Aorta (tissue), 5 donors: ENCODE measurements at regions of chr4 and their contacts with region 1.

Region 1: DNA sequence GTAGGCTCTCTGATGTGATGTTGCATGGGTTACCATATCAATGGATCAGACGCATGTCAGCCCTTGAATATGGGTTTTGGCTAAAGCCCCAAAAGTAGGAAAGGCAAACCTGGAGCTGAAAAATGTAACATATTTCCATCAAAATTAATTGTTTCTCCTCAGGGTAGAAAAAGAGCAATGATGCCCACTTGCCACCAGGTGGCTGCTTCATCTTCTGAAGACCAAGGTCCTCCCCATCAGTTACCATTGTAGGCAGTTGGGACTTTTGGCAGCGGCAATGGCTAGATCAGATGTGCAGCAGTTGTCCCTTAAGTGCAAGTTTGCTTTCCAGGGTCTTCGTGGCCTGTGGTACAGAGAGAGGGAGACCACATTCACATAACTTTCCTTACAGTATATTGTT is 118.2 kb downstream of the NAF1 start:
- DNase-seq: no peak
- ATAC-seq: no peak
- H3K4me3 ChIP-seq: no peak overlapping the region
- H3K27ac ChIP-seq: no peak overlapping the region
- H3K4me1 ChIP-seq: no peaks in the 10 kb centered on the region
- H3K27me3 ChIP-seq: no peaks in the 10 kb centered on the region

Region 2: DNA sequence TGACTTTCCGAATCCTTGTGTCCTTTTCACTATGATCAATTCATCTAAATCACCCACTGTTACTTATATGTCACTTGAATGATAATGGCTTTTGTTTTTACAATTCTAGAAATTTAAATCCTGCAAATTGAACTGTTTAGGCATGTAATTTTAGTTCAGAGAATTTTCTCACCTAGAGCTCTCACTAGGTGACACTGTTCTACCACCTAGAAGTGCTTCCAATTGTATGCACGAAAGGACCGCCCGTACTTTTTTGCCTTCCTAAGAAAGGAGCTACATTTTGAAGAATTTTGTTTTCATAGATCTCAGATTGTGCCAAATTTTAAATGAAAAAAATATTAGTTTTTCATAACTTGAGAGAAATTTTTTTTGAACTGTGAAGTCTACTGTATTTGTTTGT is 403.1 kb before region 1 on chr4:
- intact Hi-C with region 1: loop called in 1 of 2 experiments (anchors 10 kb)
- DNase-seq: no peak
- ATAC-seq: no peak
- H3K4me3 ChIP-seq: no peak overlapping the region
- H3K27ac ChIP-seq: no peak overlapping the region
- H3K4me1 ChIP-seq: no peaks in the 10 kb centered on the region
- H3K27me3 ChIP-seq: no peaks in the 10 kb centered on the region

Region 3: GRCh38 chr4:163137581-163137980 is 89.1 kb after region 1 on chr4:
- intact Hi-C with region 1: no loop called
- DNase-seq: no peak
- ATAC-seq: no peak
- H3K4me3 ChIP-seq: no peak overlapping the region
- H3K27ac ChIP-seq: no peak overlapping the region
- H3K4me1 ChIP-seq: no peaks in the 10 kb centered on the region
- H3K27me3 ChIP-seq: no peaks in the 10 kb centered on the region